GM10248 (cell line): ENCODE measurements at regions of chr6 and their contacts with region 1.

Region 1: DNA sequence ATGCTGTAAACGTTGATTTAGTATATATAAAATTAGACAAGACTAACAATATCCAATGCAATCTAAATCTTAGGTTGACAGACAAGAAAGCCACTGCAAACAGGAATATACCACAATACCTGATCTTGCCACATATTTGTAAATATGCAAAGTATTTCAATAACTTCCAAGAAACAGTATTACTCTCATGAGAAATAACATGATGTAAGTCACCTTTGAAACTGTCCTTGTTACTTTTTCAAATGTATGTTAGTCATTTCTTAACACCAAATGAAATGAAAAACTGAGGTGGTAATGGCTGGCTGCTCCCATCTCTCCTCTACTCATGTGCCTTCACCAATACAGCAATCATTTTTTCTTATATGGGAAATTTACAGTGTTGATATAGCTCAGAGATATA is 118.7 kb downstream of the ATG5 start:
- DNase-seq: peak; percentile 17
- CTCF ChIP-seq: no peak

Region 2: GRCh38 chr6:106037060-106037459 is 169.8 kb before region 1 on chr6:
- CTCF ChIA-PET with region 1: no interaction called
- POLR2A ChIA-PET with region 1: no interaction called
- DNase-seq: no peak
- CTCF ChIP-seq: no peak

Region 3: DNA sequence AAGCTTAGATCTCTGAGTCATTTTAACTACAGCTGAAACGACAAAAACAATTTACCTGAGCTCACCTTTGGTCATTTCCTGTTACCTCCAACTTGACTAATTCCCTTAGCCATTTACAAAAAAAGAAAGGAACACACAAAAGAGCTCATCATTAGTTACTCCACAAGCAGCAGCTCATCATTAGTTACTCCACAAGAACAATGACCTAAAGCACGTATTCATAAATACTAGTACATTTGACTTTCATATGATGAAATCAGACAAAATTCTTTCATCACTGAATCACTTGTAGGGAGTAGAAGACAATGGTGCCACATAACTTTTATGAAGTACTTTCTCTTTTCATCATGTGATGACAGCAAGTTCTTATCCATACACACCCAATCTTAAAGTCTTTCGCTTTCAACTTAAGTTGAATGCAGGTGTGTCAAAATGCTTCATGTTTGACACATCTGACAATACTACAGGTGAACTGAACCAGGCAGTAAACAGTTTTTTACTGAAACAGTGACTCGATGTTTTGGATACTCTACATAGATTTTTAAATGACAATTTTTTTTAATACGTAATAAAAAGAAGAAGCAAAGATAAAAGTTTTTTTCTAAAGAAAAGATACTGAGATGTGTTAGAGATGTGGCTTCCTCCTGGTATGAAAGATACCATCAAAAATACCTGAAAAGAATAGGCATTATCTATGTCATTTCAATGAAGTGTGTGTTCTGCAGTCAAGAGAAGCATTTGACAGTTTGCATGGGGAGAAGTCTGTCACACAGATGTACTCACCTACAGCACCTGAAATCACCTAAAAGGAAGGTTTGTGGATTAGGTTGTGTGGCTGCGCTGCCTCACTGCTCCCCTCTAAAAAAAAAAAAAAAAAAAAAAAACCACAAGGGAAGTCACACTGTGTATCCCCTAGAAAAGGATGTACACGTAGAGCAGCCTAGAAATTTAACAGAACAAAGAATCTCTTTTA is 11.7 kb before region 1 on chr6:
- CTCF ChIA-PET with region 1: interaction called, 15 read pairs
- POLR2A ChIA-PET with region 1: no interaction called
- DNase-seq: no peak
- CTCF ChIP-seq: no peak